AG04450 (cell line): ENCODE measurements at regions of chr4 and their contacts with region 1.

Region 1: GRCh38 chr4:72326692-72327632 is 242.1 kb downstream of the ADAMTS3 start:
- DNase-seq: no peak
- H3K4me3 ChIP-seq: no peak overlapping the region
- H3K27ac ChIP-seq: no peak overlapping the region
- H3K27me3 ChIP-seq: no peaks in the 10 kb centered on the region
- CTCF ChIP-seq: peak; percentile 71

Region 2: GRCh38 chr4:72312032-72312650 is 14.8 kb before region 1 on chr4:
- CTCF ChIA-PET with region 1: interaction called, 23 read pairs
- POLR2A ChIA-PET with region 1: no interaction called
- DNase-seq: peak; percentile 61
- H3K4me3 ChIP-seq: no peak overlapping the region
- H3K27ac ChIP-seq: peak overlapping the region; percentile 62
- H3K27me3 ChIP-seq: no peaks in the 10 kb centered on the region
- CTCF ChIP-seq: no peak

Region 3: DNA sequence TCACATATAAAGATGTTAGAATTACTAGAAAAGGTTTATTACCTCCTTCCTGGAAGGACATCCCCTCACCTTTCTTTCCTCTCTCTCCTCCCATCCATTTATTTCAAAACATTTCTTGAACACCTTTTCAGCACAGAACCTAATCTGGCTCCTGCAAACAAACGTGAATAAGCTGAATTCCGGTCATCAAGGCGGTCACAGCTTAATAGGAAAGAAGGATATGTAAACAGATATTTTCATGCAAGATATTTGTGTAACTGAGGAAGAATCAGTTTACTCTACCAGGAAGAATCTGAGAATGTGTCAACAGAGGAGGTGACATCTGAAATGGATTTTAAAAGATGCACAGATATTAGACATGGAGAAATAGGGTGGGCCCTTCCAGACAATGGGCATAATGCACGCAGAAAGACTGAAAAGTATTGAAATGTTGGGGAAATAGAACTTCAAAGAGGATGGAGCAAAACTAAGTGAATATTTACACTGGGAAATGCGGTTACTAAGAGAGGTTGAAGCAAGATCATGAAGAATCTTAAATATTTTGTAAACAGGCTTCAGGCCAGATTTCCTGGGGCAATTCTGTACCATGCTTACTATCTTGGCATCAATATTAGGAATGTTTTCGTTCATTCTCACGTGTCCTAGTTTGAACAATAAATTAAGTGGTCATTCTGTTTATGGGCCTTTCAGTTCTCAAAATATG is 25.6 kb after region 1 on chr4:
- CTCF ChIA-PET with region 1: interaction called, 15 read pairs
- POLR2A ChIA-PET with region 1: no interaction called
- DNase-seq: no peak
- H3K4me3 ChIP-seq: no peak overlapping the region
- H3K27ac ChIP-seq: no peak overlapping the region
- H3K27me3 ChIP-seq: no peaks in the 10 kb centered on the region
- CTCF ChIP-seq: no peak

Region 4: DNA sequence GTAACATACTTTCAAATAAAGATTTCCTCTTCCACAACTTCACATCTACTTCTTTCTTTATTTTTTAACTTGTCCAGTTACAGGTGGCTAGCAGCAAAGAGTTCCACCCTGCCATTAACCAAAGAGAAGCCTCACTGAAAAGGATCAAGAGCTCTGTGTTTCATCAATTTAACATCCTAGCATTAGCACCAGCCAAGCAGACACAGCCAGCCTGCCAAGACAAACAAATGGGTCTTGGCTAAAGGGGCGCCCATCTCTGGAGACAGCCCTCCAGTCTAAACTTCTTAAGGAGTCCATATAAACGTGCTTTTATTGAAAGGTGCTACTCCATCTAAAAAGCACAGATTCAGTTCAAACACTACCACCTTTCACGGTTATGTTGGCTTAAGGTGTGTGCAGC is 136.8 kb after region 1 on chr4:
- CTCF ChIA-PET with region 1: interaction called, 73 read pairs
- POLR2A ChIA-PET with region 1: no interaction called
- DNase-seq: no peak
- H3K4me3 ChIP-seq: no peak overlapping the region
- H3K27ac ChIP-seq: no peak overlapping the region
- H3K27me3 ChIP-seq: no peaks in the 10 kb centered on the region
- CTCF ChIP-seq: no peak